ENCODE measurements at regions of chr9 and their contacts with region 1.

Region 1: DNA sequence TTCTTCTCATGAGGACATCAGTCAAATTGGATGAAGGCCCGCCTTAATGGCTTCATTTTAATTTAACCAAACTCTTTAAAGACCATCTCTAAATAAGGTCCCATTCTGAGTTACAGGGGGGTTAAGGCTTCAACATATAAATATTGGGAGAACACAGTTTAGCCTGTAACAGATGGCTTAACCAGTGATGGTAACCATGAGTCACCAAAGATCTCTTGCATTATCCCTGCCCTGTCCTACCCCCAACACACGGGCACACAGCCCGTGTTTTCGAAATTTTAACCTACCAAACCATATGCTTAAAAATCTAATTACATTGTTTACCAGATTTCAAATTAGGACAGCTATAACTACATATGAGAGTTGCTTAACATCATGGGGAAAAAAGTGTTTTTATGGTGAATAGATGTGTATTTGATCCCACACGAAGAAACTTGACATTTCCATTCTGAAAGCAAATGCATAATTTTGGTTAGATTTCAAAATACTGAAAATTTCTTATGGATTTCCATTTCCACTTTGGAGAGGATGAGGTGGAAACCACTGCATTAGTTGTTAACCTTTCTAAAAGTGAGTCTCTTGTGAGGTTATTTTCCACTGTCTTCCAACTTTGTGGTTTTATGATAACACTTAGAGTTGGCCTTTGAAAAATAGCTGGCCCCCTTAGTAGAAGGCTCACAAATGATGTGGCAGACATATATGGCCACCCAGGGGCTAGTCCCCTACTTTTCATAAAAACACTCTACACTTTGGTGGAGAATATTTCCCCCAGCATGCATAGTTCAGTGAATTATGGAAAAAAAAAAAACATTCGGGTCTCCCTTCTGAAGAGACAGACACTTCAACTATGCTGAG is 849.3 kb downstream of the TLE1 start:
- DNase-seq: no peak
- H3K4me3 ChIP-seq: no peak overlapping the region
- H3K27ac ChIP-seq: no peak overlapping the region
- H3K4me1 ChIP-seq: peaks cover 4% of the 10 kb centered on the region
- H3K27me3 ChIP-seq: no peaks in the 10 kb centered on the region
- CTCF ChIP-seq: no peak
- EP300 ChIP-seq: no peak
- POLR2A ChIP-seq: no peak

Region 2: DNA sequence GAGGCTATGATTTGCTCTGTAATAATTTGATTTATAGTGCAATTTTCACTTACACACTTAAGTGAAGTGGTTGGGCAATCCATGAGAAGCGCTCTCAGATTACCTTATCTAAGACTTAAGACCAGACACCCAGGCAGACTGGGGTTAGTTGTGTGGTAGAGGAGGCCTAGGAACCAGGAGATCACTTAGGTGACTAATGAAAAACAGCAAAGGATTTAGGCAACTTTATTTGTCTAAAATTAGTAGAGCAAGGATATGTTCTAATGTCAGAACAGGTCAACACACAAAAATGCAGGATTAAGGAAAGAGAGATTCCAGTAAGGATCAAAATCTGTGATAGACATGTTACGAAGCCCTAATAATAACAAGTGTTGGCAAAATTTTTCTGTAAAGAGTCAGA is 64.5 kb before region 1 on chr9:
- intact Hi-C with region 1: no loop called
- DNase-seq: no peak
- H3K4me3 ChIP-seq: no peak overlapping the region
- H3K27ac ChIP-seq: no peak overlapping the region
- H3K4me1 ChIP-seq: no peaks in the 10 kb centered on the region
- H3K27me3 ChIP-seq: no peaks in the 10 kb centered on the region
- CTCF ChIP-seq: no peak
- EP300 ChIP-seq: no peak
- POLR2A ChIP-seq: no peak

Region 3: GRCh38 chr9:80811003-80811402 is 29.0 kb before region 1 on chr9:
- intact Hi-C with region 1: loop called in 1 of 4 experiments (anchors 1 kb)
- DNase-seq: no peak
- H3K4me3 ChIP-seq: no peak overlapping the region
- H3K27ac ChIP-seq: no peak overlapping the region
- H3K4me1 ChIP-seq: no peaks in the 10 kb centered on the region
- H3K27me3 ChIP-seq: no peaks in the 10 kb centered on the region
- CTCF ChIP-seq: no peak
- EP300 ChIP-seq: no peak
- POLR2A ChIP-seq: no peak